ENCODE measurements at regions of chr11 and their contacts with region 1.

Region 1: GRCh38 chr11:8099291-8099899 is 18.4 kb downstream of the TUB start:
- DNase-seq: peak; percentile 58 to 96 (median 86)

Region 2: GRCh38 chr11:8006349-8006977 is 92.9 kb before region 1 on chr11:
- intact Hi-C with region 1: loop called (anchors 1 kb)
- DNase-seq: peak in 6 of 10 donors; percentile 46 to 87 (median 61)

Region 3: DNA sequence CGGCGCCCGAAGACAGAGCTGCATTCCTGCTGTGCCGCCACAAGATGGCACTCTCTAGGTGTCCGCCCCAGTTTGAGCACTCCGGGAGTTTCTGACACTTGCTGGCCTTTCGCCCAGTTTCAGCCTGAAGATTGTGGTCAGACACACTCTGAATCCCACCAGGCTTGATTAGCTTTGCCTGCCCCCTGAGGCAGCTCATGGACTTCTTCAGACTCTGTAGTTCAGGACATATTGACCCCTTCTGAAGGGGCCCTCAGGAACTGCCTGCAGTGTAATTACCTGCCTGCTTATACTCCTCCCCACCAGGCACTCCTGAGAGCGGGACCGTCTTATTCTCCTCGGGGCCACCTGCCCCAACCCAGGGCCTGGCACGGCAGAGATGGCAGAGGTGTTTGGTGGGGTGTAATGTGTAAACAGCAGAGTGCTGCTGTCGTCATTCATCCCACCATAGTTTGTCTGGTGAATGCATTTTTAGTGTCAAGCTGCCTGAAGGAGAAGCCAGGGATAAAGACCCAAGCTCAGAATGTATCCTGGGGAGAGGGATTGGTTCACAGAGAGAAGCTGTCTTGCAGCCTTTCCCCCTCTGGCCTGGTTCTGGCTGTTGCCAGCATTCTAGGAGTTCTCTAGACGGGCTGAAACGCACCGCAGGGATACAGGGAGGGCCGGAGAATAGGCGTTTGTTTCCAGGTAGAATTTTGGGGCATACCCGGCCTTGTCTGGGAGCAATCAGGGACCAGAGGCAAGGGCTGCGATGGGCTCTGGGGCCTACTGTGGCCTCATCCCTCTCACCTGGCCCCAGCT is 65.9 kb before region 1 on chr11:
- intact Hi-C with region 1: loop called (anchors 2 kb)
- DNase-seq: peak; percentile 58 to 96 (median 77)

Region 4: DNA sequence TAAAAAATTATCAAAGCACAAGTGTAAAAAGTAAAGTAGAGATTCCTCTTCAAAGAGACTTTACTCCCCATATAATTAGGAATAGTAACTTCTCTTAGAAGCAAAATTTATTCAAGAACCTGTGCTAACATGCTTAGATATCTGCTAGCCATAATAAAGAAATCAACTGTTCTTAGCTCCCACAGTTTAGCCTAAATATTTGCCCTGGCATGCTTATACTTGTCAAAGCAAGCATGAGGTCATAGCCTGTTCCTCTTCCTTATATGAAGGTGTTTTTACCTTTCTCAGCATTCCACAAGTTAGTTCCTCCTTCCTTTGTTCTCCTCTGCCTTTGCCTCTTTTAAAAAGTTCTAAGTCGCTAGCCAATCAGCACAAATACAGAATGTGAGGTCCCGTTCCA is 39.1 kb after region 1 on chr11:
- intact Hi-C with region 1: no loop called
- DNase-seq: no peak

Region 5: DNA sequence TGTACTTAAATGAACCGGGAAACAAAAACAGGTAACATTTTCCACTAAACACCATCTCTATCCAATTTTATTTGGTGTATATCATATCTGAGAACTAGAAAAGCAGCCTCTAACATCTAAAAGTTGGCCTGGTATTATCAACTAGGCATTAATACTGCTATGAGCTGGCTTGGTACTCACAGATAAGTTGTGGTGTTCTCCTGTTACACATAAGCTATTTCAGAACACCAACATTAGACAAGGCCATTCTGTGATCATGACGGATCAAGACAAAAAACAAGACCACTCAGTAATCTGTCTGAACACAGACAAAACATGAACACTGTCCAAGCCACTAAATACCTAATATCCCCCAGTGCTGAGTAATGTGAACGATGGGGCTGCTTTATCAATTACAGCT is 57.5 kb after region 1 on chr11:
- intact Hi-C with region 1: no loop called
- DNase-seq: no peak